Thyroid gland (tissue), 4 donors: ENCODE measurements at regions of chr11 and their contacts with region 1.

Region 1: GRCh38 chr11:47154616-47155570 is 21.8 kb downstream of the ARFGAP2 start:
- DNase-seq: no peak
- H3K4me3 ChIP-seq: no peak overlapping the region
- H3K27ac ChIP-seq: no peak overlapping the region
- H3K4me1 ChIP-seq: no peaks in the 10 kb centered on the region
- H3K27me3 ChIP-seq: no peaks in the 10 kb centered on the region
- CTCF ChIP-seq: no peak
- POLR2A ChIP-seq: no peak

Region 2: DNA sequence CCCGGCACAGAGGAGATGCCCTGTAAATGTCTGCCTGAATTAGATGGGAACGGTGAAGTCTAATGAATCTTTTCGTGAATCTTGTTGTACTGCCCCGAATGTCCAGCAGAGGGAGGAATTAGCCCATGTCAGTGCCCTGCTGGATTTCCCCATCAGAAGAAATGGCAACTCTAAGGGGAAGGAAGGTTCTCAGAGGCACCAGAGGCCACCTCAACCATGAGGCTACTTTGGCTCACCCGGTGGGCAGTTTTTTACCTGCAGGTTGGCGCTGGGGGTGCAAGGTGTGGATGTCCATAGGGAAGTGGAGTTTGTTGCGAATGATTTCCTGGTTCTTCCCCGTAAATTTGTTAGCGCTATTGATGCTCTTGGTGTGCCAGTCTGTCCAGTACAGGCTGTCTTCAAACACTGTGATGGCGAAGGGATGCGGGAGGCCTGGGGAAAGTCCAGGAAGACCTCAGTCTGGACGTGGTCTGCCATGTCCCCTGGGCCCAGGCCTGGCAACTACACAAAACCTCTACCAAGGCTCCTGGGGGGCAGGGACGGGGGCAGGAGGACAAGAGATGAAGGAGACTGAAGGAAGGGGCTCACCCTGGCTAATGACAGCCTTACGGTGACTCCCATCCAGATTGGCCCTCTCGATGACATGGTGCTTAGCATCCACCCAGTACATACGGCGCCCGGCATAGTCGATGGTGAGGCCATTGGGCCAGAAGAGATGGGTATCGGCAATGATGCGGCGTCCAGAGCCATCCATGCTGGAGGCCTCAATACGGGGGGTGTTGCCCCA is 265.0 kb before region 1 on chr11:
- intact Hi-C with region 1: loop called (anchors 2 kb)
- DNase-seq: peak; percentile 69 to 75
- H3K4me3 ChIP-seq: no peak overlapping the region
- H3K27ac ChIP-seq: no peak overlapping the region
- H3K4me1 ChIP-seq: no peaks in the 10 kb centered on the region
- H3K27me3 ChIP-seq: no peaks in the 10 kb centered on the region
- CTCF ChIP-seq: peak; percentile 71 to 95 (median 84)
- POLR2A ChIP-seq: no peak

Region 3: GRCh38 chr11:47186076-47186936 is 31.4 kb after region 1 on chr11 and contains the start of gene PACSIN3:
- intact Hi-C with region 1: no loop called
- DNase-seq: peak; percentile 64 to 72
- H3K4me3 ChIP-seq: peak within 1 kb of the TSS; percentile 50 to 91 (median 87)
- H3K27ac ChIP-seq: peak within 1 kb of the TSS; percentile 84 to 96 (median 94)
- H3K4me1 ChIP-seq: peaks cover 27 to 38% of the 10 kb centered on the region in 2 donors
- H3K27me3 ChIP-seq: no peaks in the 10 kb centered on the region
- CTCF ChIP-seq: peak in 3 of 6 experiments; percentile 24 to 34 (median 25)
- POLR2A ChIP-seq: peak; percentile 33 to 55
- total RNA-seq, gene PACSIN3: 43.6 to 71.6 (median 54.2) TPM